ENCODE measurements at regions of chr2 and their contacts with region 1.

Region 1: DNA sequence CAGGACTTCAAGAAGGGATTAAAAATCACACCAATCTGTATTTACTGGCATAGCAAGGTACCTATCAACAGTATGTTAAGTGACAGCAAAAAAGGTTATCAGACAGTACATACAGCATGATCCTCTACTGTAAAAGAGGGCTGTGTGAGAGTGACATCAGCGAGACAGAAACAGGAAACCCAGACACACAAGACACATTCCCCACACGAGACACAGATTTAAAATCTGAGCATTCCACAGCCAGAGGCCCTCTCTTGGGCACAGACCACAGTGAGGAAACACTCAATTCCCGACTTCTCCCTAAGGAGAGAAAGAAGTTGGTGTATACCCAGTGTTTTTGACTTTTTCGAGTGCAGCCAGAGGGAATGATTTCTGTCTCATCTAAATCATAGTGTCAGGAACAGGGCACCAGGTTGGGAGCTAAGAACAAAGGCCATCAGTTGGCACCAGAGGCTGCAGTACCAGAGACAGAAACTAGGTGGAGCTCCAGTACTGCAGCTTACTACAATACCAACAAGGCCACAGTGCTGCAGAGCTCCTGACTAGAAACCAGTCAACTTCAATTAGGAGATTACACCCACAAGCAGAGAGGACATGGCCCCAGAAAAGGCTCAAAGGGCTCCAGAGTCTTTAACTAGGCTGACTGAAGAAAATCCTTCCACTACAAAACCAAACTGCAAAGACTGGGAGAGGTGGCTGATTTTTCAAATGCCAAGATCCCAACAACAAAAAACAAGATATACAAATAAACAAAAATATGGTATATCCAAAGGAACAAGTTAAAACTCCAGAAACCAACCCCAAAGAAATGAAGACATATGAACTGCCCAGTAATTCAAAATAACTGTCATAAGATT is 41.0 kb downstream of the UNC50 start:
- DNase-seq: peak; percentile 90
- ATAC-seq: peak; percentile 91
- H3K4me3 Mint-ChIP-seq: no peak overlapping the region
- H3K27ac Mint-ChIP-seq: peak overlapping the region; percentile 27
- H3K4me1 Mint-ChIP-seq: peaks cover 55% of the 10 kb centered on the region
- H3K27me3 Mint-ChIP-seq: no peaks in the 10 kb centered on the region

Region 2: GRCh38 chr2:98476192-98476868 is 173.0 kb before region 1 on chr2:
- CTCF ChIA-PET with region 1: no interaction called
- POLR2A ChIA-PET with region 1: no interaction called
- DNase-seq: no peak
- ATAC-seq: no peak
- H3K4me3 Mint-ChIP-seq: no peak overlapping the region
- H3K27ac Mint-ChIP-seq: peak overlapping the region; percentile 93
- H3K4me1 Mint-ChIP-seq: peaks cover 100% of the 10 kb centered on the region
- H3K27me3 Mint-ChIP-seq: no peaks in the 10 kb centered on the region

Region 3: GRCh38 chr2:98588880-98589431 is 60.4 kb before region 1 on chr2:
- CTCF ChIA-PET with region 1: no interaction called
- POLR2A ChIA-PET with region 1: no interaction called
- DNase-seq: no peak
- ATAC-seq: no peak
- H3K4me3 Mint-ChIP-seq: no peak overlapping the region
- H3K27ac Mint-ChIP-seq: peak overlapping the region; percentile 74
- H3K4me1 Mint-ChIP-seq: peaks cover 19% of the 10 kb centered on the region
- H3K27me3 Mint-ChIP-seq: no peaks in the 10 kb centered on the region

Region 4: GRCh38 chr2:98664327-98664726 is 15.0 kb after region 1 on chr2:
- CTCF ChIA-PET with region 1: interaction called, 20 read pairs
- POLR2A ChIA-PET with region 1: interaction called, 3 read pairs
- DNase-seq: peak; percentile 78
- ATAC-seq: peak; percentile 72
- H3K4me3 Mint-ChIP-seq: peak overlapping the region; percentile 65
- H3K27ac Mint-ChIP-seq: peak overlapping the region; percentile 93
- H3K4me1 Mint-ChIP-seq: peaks cover 68% of the 10 kb centered on the region
- H3K27me3 Mint-ChIP-seq: no peaks in the 10 kb centered on the region

Region 5: DNA sequence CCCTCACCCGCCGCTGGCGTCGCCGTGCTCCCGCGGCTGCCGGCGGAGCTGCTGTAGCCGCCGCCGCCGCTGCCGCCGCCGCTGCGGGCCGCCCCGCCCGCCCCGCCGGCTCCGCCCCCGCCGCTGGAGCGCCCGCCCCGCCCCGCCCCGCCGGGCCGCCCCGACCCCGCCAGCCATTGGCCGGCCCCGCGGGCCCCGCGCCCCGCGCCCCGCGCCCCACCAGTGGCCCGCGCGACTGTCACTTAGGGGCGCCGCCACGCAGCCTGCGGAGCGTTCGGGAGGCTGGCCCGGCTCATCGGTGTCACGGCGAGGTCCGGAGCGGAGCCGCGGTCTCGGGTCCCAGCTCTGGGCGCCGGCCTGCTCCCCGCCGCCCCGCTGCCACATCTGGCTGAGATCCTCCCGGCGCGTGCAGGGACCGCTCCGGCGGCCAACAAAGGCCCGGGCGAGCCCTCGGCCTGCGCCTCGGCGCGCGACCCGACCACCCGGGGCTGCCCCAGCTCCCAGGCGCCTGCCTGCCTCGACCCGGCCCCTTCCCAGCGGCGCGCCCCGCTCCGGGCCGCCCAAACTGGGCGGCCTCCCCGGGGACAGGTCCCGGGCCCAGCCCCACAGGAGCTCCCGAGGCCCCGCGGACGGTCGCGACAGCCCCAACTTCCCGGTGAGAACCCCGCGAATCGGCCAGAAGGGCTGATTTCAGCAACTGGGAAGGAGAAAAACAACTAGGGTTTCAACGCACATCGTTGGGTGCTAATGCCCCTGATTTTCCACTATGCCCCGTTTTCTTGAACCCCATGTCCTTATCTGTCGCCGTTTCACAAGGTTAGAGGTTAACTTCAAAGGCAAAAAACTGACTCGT is 81.9 kb after region 1 on chr2 and contains the start of gene MGAT4A:
- CTCF ChIA-PET with region 1: interaction called, 42 read pairs
- POLR2A ChIA-PET with region 1: interaction called, 13 read pairs
- DNase-seq: peak; percentile 81
- ATAC-seq: peak; percentile 85
- H3K4me3 Mint-ChIP-seq: peak within 1 kb of the TSS; percentile 92
- H3K27ac Mint-ChIP-seq: peak within 1 kb of the TSS; percentile 90
- H3K4me1 Mint-ChIP-seq: peaks cover 64% of the 10 kb centered on the region
- H3K27me3 Mint-ChIP-seq: no peaks in the 10 kb centered on the region
- total RNA-seq, gene MGAT4A: 73.4 to 76.2 TPM

Region 6: GRCh38 chr2:98828793-98829371 is 179.5 kb after region 1 on chr2:
- CTCF ChIA-PET with region 1: interaction called, 49 read pairs
- POLR2A ChIA-PET with region 1: interaction called, 3 read pairs
- DNase-seq: no peak
- ATAC-seq: peak; percentile 59
- H3K4me3 Mint-ChIP-seq: peak overlapping the region; percentile 29
- H3K27ac Mint-ChIP-seq: peak overlapping the region; percentile 77
- H3K4me1 Mint-ChIP-seq: peaks cover 64% of the 10 kb centered on the region
- H3K27me3 Mint-ChIP-seq: no peaks in the 10 kb centered on the region

Region 7: GRCh38 chr2:99066075-99066958 is 417.0 kb after region 1 on chr2:
- CTCF ChIA-PET with region 1: interaction called, 18 read pairs
- POLR2A ChIA-PET with region 1: no interaction called
- DNase-seq: peak; percentile 62
- ATAC-seq: peak; percentile 98
- H3K4me3 Mint-ChIP-seq: no peak overlapping the region
- H3K27ac Mint-ChIP-seq: no peak overlapping the region
- H3K4me1 Mint-ChIP-seq: peaks cover 3% of the 10 kb centered on the region
- H3K27me3 Mint-ChIP-seq: no peaks in the 10 kb centered on the region